ENCODE measurements at regions of chr1 and their contacts with region 1.

Region 1: DNA sequence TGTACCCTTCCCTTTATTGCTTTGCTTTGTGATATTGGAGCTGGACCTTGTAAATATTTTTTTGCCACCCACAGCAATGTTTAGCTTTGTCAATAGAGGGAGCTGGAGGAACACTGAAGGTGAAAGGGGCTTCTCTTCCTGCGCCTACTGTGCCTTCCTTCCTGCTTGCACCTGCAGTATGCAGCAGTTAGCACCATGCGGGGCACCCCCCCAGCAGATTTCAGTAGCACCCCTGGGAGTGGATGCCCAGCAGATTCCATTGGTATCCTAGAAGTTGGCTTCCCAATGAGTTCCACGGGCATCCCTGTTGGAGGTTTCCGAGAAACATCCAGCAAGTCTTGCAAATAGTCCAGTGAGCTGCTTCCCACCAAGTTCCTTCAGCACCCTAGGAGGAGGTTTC is 25.6 kb downstream of the S100A10 start:
- DNase-seq: no peak
- H3K4me3 ChIP-seq: no peak overlapping the region
- H3K27me3 ChIP-seq: no peaks in the 10 kb centered on the region; the same call in 1 of the 2 replicates
- CTCF ChIP-seq: peak; percentile 77

Region 2: GRCh38 chr1:151934048-151934493 is 34.0 kb before region 1 on chr1:
- CTCF ChIA-PET with region 1: interaction called, 58 read pairs
- POLR2A ChIA-PET with region 1: no interaction called
- DNase-seq: no peak
- H3K4me3 ChIP-seq: no peak overlapping the region
- H3K27me3 ChIP-seq: peaks cover 5% of the 10 kb centered on the region; the same call in 1 of the 2 replicates
- CTCF ChIP-seq: peak; percentile 89

Region 3: GRCh38 chr1:151945725-151946364 is 22.2 kb before region 1 on chr1:
- CTCF ChIA-PET with region 1: interaction called, 24 read pairs
- POLR2A ChIA-PET with region 1: interaction called, 4 read pairs
- DNase-seq: peak; percentile 96
- H3K4me3 ChIP-seq: no peak overlapping the region
- H3K27me3 ChIP-seq: no peaks in the 10 kb centered on the region
- CTCF ChIP-seq: no peak

Region 4: GRCh38 chr1:151953409-151954094 is 14.5 kb before region 1 on chr1:
- CTCF ChIA-PET with region 1: interaction called, 24 read pairs
- POLR2A ChIA-PET with region 1: no interaction called
- DNase-seq: no peak
- H3K4me3 ChIP-seq: no peak overlapping the region
- H3K27me3 ChIP-seq: no peaks in the 10 kb centered on the region
- CTCF ChIP-seq: no peak

Region 5: DNA sequence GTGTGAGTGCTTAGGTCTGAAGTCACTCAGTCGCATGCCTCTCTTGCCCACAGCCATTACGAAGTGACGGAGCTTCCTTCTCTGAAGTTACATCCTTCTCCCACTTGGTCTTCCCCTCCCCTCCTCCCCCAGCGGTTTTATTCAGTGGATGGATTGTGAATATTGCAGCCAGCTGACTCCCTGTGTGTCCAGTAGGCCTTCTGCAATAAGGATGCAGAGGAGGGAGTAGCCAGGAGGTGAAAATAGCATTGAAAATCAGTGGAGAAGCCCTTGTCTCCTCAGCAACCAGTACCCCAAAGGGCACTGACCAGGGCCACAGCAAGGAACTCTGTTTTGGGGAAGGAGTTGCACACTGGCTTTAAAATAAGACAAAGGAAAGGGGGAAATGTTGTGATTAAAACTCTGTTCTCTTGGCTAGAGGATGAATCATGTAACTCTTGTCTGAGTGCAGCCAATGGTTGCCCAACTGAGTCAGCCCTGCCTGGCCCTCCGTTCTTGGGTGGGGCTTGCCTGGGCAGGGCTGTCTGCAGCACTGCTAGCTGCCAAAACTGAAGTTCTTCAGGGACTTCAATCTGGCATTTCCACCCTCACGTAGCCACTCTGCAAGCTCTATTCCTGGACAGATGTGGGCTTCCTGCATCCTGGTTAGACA is 21.3 kb after region 1 on chr1:
- CTCF ChIA-PET with region 1: interaction called, 299 read pairs
- POLR2A ChIA-PET with region 1: interaction called, 5 read pairs
- DNase-seq: peak; percentile 55
- H3K4me3 ChIP-seq: no peak overlapping the region
- H3K27me3 ChIP-seq: no peaks in the 10 kb centered on the region
- CTCF ChIP-seq: no peak

Region 6: GRCh38 chr1:152013664-152014237 is 45.7 kb after region 1 on chr1:
- CTCF ChIA-PET with region 1: interaction called, 44 read pairs
- POLR2A ChIA-PET with region 1: no interaction called
- DNase-seq: no peak
- H3K4me3 ChIP-seq: no peak overlapping the region
- H3K27me3 ChIP-seq: peaks cover 12% of the 10 kb centered on the region
- CTCF ChIP-seq: peak; percentile 82

Measured in BJ (cell line).